CD4-positive, alpha-beta T cell (primary cell): ENCODE measurements at regions of chr19 and their contacts with region 1.

Region 1: DNA sequence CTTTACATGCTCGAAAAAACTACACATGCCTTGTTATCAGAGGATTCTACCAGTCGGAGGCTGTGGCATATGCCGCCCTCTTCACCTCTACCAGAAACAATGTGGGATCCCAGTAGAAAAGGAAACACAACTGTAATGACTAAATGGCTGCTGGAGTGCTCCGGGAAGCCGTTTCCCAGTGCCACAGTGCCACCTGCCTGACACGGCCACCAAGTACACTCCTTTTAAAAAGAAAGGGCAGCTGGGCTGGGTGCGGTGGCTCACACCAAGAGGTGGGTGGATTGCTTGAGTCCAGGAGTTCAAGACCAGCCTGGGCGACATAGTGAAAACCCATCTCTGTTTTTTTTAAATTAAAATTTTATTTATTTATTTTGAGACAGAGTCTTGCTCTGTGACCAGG is 67.3 kb downstream of the TRPM4 start:
- DNase-seq: peak in 5 of 14 experiments; percentile 11 to 56 (median 27)
- ATAC-seq: peak; percentile 43
- H3K4me3 ChIP-seq: no peak overlapping the region
- H3K4me3 Mint-ChIP-seq: no peak overlapping the region
- H3K27ac ChIP-seq: no peak overlapping the region
- H3K27ac Mint-ChIP-seq: no peak overlapping the region
- H3K4me1 ChIP-seq: peaks cover 8% of the 10 kb centered on the region
- H3K4me1 Mint-ChIP-seq: peaks cover 7% of the 10 kb centered on the region
- H3K27me3 ChIP-seq: peaks cover 0 to 4% of the 10 kb centered on the region in 2 experiments
- H3K27me3 Mint-ChIP-seq: peaks cover 13% of the 10 kb centered on the region
- CTCF ChIP-seq: no peak

Region 2: GRCh38 chr19:49301165-49301865 is 76.5 kb after region 1 on chr19:
- CTCF ChIA-PET with region 1: no interaction called
- POLR2A ChIA-PET with region 1: no interaction called
- intact Hi-C with region 1: loop called in 1 of 2 experiments (anchors 2 kb)
- DNase-seq: peak; percentile 64 to 88 (median 75)
- ATAC-seq: peak; percentile 95
- H3K4me3 ChIP-seq: no peak overlapping the region
- H3K4me3 Mint-ChIP-seq: no peak overlapping the region
- H3K27ac ChIP-seq: no peak overlapping the region
- H3K27ac Mint-ChIP-seq: no peak overlapping the region
- H3K4me1 ChIP-seq: peaks cover 6% of the 10 kb centered on the region
- H3K4me1 Mint-ChIP-seq: peaks cover 13% of the 10 kb centered on the region
- H3K27me3 ChIP-seq: no peaks in the 10 kb centered on the region
- H3K27me3 Mint-ChIP-seq: no peaks in the 10 kb centered on the region
- CTCF ChIP-seq: peak; percentile 79

Region 3: GRCh38 chr19:49331616-49332055 is 106.8 kb after region 1 on chr19:
- CTCF ChIA-PET with region 1: no interaction called
- POLR2A ChIA-PET with region 1: no interaction called
- intact Hi-C with region 1: loop called (anchors 1 to 2 kb)
- DNase-seq: peak; percentile 33 to 88 (median 49)
- ATAC-seq: peak; percentile 72
- H3K4me3 ChIP-seq: no peak overlapping the region
- H3K4me3 Mint-ChIP-seq: peak overlapping the region; percentile 72
- H3K27ac ChIP-seq: no peak overlapping the region
- H3K27ac Mint-ChIP-seq: peak overlapping the region; percentile 93
- H3K4me1 ChIP-seq: peaks cover 63% of the 10 kb centered on the region
- H3K4me1 Mint-ChIP-seq: peaks cover 79% of the 10 kb centered on the region
- H3K27me3 ChIP-seq: no peaks in the 10 kb centered on the region
- H3K27me3 Mint-ChIP-seq: no peaks in the 10 kb centered on the region
- CTCF ChIP-seq: no peak

Region 4: DNA sequence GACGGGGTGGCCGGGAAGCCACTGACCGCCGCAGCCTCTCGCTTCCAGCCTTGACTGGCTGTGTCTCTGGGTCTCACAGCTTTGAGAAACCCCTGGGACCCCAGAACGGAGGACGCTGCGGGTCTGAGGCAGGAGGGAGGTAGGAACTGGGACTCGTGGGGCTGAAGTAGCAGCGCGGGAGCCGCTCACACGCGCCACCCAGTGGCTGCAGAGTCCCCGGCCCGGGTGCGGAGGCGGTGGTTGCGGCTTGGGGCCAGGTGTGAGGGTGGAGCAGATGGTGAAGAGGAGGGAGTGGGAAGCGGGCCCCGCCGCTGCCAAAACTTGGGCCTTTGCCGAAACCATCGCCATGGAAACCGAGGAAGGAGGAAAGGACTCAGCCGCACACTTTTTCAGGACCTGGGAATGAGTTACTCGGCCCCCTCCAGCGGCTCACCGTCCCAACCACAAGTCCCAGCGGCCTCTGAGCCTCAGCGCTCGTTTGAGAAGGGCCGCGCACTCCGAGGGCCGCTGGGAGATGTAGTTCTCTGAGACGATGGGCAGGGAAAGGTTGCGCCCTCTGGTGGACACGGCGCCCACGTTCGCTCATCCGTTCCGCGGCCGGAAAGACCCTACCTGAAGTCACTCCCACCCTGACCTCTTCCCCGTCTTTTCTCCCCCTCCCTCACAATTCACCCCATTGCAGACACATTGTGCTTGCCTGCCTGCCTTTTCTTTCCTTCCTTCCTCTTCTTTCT is 218.7 kb after region 1 on chr19:
- CTCF ChIA-PET with region 1: no interaction called
- POLR2A ChIA-PET with region 1: no interaction called
- intact Hi-C with region 1: loop called (anchors 1 kb)
- DNase-seq: peak; percentile 89 to 96 (median 91)
- ATAC-seq: peak; percentile 89
- H3K4me3 ChIP-seq: peak overlapping the region; percentile 66
- H3K4me3 Mint-ChIP-seq: peak overlapping the region; percentile 85
- H3K27ac ChIP-seq: no peak overlapping the region
- H3K27ac Mint-ChIP-seq: peak overlapping the region; percentile 84
- H3K4me1 ChIP-seq: peaks cover 47% of the 10 kb centered on the region
- H3K4me1 Mint-ChIP-seq: peaks cover 41% of the 10 kb centered on the region
- H3K27me3 ChIP-seq: peaks cover 39% of the 10 kb centered on the region in 2 experiments
- H3K27me3 Mint-ChIP-seq: peaks cover 47% of the 10 kb centered on the region
- CTCF ChIP-seq: peak; percentile 95

Region 5: GRCh38 chr19:49468746-49469447 is 244.0 kb after region 1 on chr19:
- CTCF ChIA-PET with region 1: interaction called, 4 read pairs
- POLR2A ChIA-PET with region 1: no interaction called
- intact Hi-C with region 1: loop called in 1 of 2 experiments (anchors 2 kb)
- DNase-seq: peak; percentile 74 to 99 (median 84)
- ATAC-seq: peak; percentile 75
- H3K4me3 ChIP-seq: peak overlapping the region; percentile 9
- H3K4me3 Mint-ChIP-seq: peak overlapping the region; percentile 84
- H3K27ac ChIP-seq: peak overlapping the region; percentile 86 to 96
- H3K27ac Mint-ChIP-seq: peak overlapping the region; percentile 98
- H3K4me1 ChIP-seq: peaks cover 96% of the 10 kb centered on the region
- H3K4me1 Mint-ChIP-seq: peaks cover 42% of the 10 kb centered on the region
- H3K27me3 ChIP-seq: no peaks in the 10 kb centered on the region
- H3K27me3 Mint-ChIP-seq: no peaks in the 10 kb centered on the region
- CTCF ChIP-seq: no peak

Region 6: DNA sequence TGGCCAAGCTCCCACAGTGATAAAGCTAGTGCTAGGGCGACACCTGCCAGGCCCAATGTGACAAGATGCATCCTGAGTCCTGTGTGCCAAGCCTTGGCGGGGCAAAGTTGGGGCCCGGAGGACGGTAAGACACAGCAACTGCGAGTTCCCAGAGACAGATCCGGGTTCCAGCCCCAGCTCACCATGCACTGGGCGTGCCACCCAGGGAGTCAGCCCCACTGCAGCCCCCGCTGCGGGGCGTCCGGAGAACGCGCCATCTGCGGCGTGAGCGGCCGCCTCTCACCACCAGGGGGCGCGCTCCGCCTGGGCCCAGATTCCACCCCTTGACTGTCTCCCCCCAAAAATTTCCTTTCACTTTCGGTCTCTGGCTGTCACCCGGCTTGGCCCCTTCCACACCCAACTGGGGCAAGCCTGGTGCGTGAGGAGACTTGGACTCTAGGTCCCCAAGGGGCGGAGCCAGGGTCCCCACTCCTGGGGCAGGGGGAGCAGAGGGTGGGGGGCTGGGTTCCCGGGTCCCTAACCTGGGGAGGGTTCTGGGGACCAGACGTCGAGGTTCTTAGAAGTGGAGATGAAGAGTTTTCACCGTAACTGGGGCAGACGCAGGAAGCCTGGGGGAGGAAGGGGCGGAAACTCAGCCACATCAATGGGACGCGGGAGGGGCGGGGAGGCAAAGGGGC is 249.2 kb after region 1 on chr19 and contains the start of gene FLT3LG:
- CTCF ChIA-PET with region 1: interaction called, 4 read pairs
- POLR2A ChIA-PET with region 1: no interaction called
- intact Hi-C with region 1: loop called (anchors 1 to 2 kb)
- DNase-seq: peak; percentile 85 to 98 (median 90)
- ATAC-seq: peak; percentile 49
- H3K4me3 ChIP-seq: peak within 1 kb of the TSS; percentile 97
- H3K4me3 Mint-ChIP-seq: peak within 1 kb of the TSS; percentile 100
- H3K27ac ChIP-seq: peak within 1 kb of the TSS; percentile 90 to 98
- H3K27ac Mint-ChIP-seq: peak within 1 kb of the TSS; percentile 98
- H3K4me1 ChIP-seq: peaks cover 78% of the 10 kb centered on the region
- H3K4me1 Mint-ChIP-seq: peaks cover 59% of the 10 kb centered on the region
- H3K27me3 ChIP-seq: no peaks in the 10 kb centered on the region
- H3K27me3 Mint-ChIP-seq: no peaks in the 10 kb centered on the region
- CTCF ChIP-seq: peak; percentile 95
- total RNA-seq, gene FLT3LG: 311 to 325 TPM

Region 7: GRCh38 chr19:49580264-49581006 is 355.6 kb after region 1 on chr19 and contains the start of gene NOSIP:
- CTCF ChIA-PET with region 1: no interaction called
- POLR2A ChIA-PET with region 1: no interaction called
- intact Hi-C with region 1: loop called in 1 of 2 experiments (anchors 10 kb)
- DNase-seq: peak; percentile 93 to 98 (median 96)
- ATAC-seq: peak; percentile 98
- H3K4me3 ChIP-seq: peak within 1 kb of the TSS; percentile 75
- H3K4me3 Mint-ChIP-seq: peak within 1 kb of the TSS; percentile 90
- H3K27ac ChIP-seq: peak within 1 kb of the TSS in 1 of 2 donors; percentile 8
- H3K27ac Mint-ChIP-seq: peak within 1 kb of the TSS; percentile 67
- H3K4me1 ChIP-seq: peaks cover 18% of the 10 kb centered on the region
- H3K4me1 Mint-ChIP-seq: peaks cover 33% of the 10 kb centered on the region
- H3K27me3 ChIP-seq: no peaks in the 10 kb centered on the region
- H3K27me3 Mint-ChIP-seq: no peaks in the 10 kb centered on the region
- CTCF ChIP-seq: no peak
- total RNA-seq, gene NOSIP: 202 to 203 TPM